B cell (primary cell): ENCODE measurements at regions of chr7 and their contacts with region 1.

Region 1: DNA sequence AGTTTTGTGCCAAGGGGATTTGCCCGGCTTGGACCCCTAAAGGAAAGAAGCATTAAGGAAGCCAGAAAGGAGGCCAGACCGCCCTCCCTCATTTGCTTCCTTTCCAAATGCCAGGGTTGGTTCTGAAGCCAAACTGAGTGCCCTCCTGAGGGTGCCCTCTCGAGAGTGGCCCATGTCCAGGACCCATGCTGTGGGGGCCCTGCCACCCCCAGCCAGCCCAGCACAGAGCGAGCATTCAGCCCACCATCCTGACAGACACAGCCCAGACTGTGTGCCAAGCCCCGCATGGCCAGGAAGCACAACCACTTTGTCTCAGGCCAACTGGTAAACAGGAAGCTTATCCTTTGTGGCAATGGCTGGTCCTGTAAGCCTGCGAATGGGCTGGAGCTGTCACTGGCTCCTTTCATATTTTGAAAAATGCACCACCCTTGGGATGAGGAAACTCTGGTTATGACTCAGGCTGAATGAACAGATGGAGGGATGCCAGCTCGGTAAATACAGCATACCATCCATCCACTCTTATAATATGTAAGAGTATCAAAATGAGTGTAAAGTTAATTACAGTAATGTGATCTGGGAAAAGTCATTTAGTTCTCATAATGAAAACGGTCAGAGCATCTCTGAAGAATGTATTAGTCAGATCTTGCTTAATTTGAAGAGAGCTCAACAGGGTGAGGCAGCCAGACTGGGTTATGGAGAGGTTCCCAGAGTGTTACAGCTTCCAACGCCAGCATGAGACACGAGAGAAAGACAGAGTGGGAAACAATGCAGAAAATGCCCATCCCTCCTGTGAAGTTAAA is 65.0 kb downstream of the STK17A start:
- DNase-seq: peak; percentile 35
- ATAC-seq: no peak
- H3K4me3 ChIP-seq: peak overlapping the region; percentile 24 to 73 (median 48)
- H3K4me3 Mint-ChIP-seq: peak overlapping the region; percentile 81
- H3K27ac ChIP-seq: peak overlapping the region; percentile 87 to 97
- H3K27ac Mint-ChIP-seq: peak overlapping the region; percentile 87
- H3K4me1 ChIP-seq: peaks cover 93 to 97% of the 10 kb centered on the region in 2 donors
- H3K4me1 Mint-ChIP-seq: peaks cover 90% of the 10 kb centered on the region
- H3K27me3 ChIP-seq: no peaks in the 10 kb centered on the region
- H3K27me3 Mint-ChIP-seq: no peaks in the 10 kb centered on the region
- CTCF ChIP-seq: no peak

Region 2: DNA sequence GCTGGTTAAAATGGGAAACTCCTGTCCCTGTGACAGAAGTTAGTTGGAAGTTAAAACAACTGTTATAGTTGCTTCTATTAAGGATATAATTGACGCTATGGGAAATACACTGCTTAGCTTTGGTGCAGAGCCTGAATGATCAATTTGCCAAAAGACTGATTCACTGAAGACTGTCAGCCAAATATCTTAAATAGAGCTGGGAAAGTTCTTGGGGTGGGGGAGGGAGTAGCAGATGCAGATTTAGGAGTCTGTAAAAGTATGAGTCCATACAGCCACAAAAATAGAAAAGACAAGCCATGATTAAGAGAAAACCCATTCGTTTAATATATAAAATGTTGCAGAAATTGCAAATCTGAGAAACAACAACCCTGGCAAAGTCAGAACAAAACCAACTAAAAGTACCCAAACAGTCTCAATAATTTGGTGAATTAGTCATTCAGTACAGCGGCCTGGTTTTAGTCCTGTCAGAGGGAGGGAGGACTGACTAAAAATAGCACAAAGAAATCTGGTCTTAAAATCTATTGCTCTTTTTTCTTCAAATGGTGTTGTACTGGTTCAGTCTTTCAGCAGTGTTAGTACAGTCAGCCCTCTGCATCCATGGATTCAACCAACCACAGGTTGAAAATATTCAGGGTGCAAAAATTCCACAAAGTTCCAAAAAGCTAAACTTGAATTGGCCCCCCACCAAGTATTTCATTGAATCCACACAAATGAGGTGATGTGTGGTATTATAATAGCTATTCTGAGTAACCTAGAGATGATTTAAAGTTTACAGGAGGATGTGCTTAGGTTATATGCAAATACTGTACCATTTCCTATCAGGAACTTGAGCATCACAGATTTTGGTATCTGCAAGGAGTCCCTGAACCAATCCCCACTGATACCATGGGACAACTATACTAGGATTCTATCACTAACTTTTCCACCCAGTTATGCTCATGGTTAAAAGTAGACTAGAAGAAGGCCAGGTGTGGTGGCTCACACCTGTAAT is 35.0 kb before region 1 on chr7:
- CTCF ChIA-PET with region 1: interaction called, 3 read pairs
- POLR2A ChIA-PET with region 1: no interaction called
- intact Hi-C with region 1: loop called (anchors 5 kb)
- DNase-seq: no peak
- ATAC-seq: no peak
- H3K4me3 ChIP-seq: peak overlapping the region in 1 of 5 experiments; percentile 2
- H3K4me3 Mint-ChIP-seq: peak overlapping the region; percentile 38
- H3K27ac ChIP-seq: peak overlapping the region in 1 of 2 donors; percentile 75
- H3K27ac Mint-ChIP-seq: peak overlapping the region; percentile 57
- H3K4me1 ChIP-seq: peaks cover 45 to 51% of the 10 kb centered on the region in 2 donors
- H3K4me1 Mint-ChIP-seq: peaks cover 50% of the 10 kb centered on the region
- H3K27me3 ChIP-seq: no peaks in the 10 kb centered on the region
- H3K27me3 Mint-ChIP-seq: no peaks in the 10 kb centered on the region
- CTCF ChIP-seq: no peak

Region 3: DNA sequence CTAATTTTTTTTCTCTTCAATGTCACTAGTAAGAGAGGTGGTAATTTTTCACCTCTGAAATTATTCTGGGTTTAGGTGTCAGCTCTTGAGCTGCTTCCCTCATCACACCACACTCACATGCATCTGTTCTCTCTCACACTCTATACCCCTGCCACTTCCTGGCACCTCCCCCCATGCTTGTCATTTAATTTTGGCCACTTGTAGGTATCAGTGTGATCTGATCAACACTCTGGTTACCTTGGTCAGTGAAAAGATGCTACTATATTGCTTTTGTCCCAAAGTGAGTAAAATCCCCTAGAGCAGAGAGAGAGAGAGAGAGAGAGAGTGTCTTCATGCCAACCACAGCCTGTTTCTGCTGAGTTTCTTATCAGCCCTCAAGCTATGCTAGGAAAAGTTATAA is 22.4 kb before region 1 on chr7:
- CTCF ChIA-PET with region 1: interaction called, 5 read pairs
- POLR2A ChIA-PET with region 1: interaction called, 10 read pairs
- intact Hi-C with region 1: no loop called
- DNase-seq: peak; percentile 58
- ATAC-seq: peak; percentile 64
- H3K4me3 ChIP-seq: peak overlapping the region in 1 of 5 experiments; percentile 6
- H3K4me3 Mint-ChIP-seq: peak overlapping the region; percentile 64
- H3K27ac ChIP-seq: peak overlapping the region; percentile 37 to 79
- H3K27ac Mint-ChIP-seq: peak overlapping the region; percentile 67
- H3K4me1 ChIP-seq: peaks cover 47 to 50% of the 10 kb centered on the region in 2 donors
- H3K4me1 Mint-ChIP-seq: peaks cover 81% of the 10 kb centered on the region
- H3K27me3 ChIP-seq: no peaks in the 10 kb centered on the region
- H3K27me3 Mint-ChIP-seq: no peaks in the 10 kb centered on the region
- CTCF ChIP-seq: no peak

Region 4: GRCh38 chr7:43669286-43670081 is 21.6 kb after region 1 on chr7:
- CTCF ChIA-PET with region 1: interaction called, 4 read pairs
- POLR2A ChIA-PET with region 1: interaction called, 14 read pairs
- intact Hi-C with region 1: loop called (anchors 2 kb)
- DNase-seq: peak; percentile 64
- ATAC-seq: peak; percentile 66
- H3K4me3 ChIP-seq: peak overlapping the region in 2 of 5 experiments; percentile 3 to 19
- H3K4me3 Mint-ChIP-seq: peak overlapping the region; percentile 50
- H3K27ac ChIP-seq: peak overlapping the region; percentile 4 to 71
- H3K27ac Mint-ChIP-seq: peak overlapping the region; percentile 71
- H3K4me1 ChIP-seq: peaks cover 20 to 46% of the 10 kb centered on the region in 2 donors
- H3K4me1 Mint-ChIP-seq: peaks cover 53% of the 10 kb centered on the region
- H3K27me3 ChIP-seq: no peaks in the 10 kb centered on the region
- H3K27me3 Mint-ChIP-seq: no peaks in the 10 kb centered on the region
- CTCF ChIP-seq: no peak

Region 5: DNA sequence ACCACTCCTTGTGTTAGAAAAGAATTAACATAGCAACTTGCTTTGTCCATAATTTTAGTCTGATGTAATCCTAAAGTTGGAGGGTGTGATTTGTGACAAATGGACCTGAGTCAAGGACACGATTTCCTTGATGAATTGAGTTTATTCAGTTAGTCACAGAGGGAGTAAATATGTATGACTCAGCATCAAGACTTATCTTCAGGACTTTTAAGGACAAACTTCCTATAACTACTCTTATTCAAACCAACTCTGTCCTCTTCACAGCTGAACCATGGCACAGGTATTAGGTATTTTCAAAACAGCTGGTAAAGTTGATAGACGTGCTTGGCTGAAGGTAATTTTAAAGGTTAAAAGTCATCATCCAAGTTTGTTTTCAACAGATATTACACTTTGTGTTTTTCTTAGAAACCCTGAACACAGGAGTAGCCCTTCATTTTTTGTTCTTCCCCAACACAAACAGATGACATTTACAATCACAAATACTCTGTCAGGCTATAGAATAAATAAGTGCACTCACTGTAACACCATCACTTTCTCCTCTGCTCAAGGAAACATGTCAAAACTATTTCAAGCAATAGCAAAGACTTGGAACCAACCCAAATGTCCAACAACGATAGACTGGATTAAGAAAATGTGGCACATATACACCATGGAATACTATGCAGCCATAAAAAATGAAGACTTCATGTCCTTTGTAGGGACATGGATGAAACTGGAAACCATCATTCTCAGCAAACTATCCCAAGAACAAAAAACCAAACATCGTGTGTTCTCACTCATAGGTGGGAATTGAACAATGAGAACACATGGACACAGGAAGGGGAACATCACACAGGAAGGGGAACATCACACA is 26.9 kb after region 1 on chr7:
- CTCF ChIA-PET with region 1: interaction called, 4 read pairs
- POLR2A ChIA-PET with region 1: interaction called, 7 read pairs
- intact Hi-C with region 1: loop called (anchors 2 kb)
- DNase-seq: no peak
- ATAC-seq: no peak
- H3K4me3 ChIP-seq: no peak overlapping the region
- H3K4me3 Mint-ChIP-seq: no peak overlapping the region
- H3K27ac ChIP-seq: peak overlapping the region in 1 of 2 donors; percentile 2
- H3K27ac Mint-ChIP-seq: peak overlapping the region; percentile 61
- H3K4me1 ChIP-seq: peaks cover 22 to 52% of the 10 kb centered on the region in 2 donors
- H3K4me1 Mint-ChIP-seq: peaks cover 58% of the 10 kb centered on the region
- H3K27me3 ChIP-seq: no peaks in the 10 kb centered on the region
- H3K27me3 Mint-ChIP-seq: no peaks in the 10 kb centered on the region
- CTCF ChIP-seq: no peak